SK-N-SH (cell line): ENCODE measurements at regions of chr15 and their contacts with region 1.

Region 1: DNA sequence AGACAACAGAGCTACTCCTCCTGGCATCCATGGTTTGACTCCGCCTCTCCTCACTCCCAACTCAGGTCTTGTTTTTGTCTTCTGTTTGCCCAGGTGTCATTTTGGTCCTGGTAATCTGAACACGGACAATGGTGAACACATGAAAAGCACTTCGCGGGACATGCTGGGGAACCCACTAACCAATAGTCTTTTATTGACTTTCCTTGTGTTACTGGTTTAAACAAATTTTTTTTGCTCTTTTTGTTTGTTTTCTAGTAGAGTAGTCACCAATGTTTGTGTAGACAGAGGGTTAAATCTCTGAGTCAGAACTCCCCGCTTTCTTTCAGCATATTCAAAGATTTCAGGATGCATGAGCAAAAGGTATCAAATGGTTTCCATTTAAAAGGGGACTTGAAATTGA is 38.3 kb downstream of the LARP6 start:
- DNase-seq: no peak
- H3K4me3 ChIP-seq: no peak overlapping the region
- H3K27ac ChIP-seq: no peak overlapping the region
- H3K4me1 ChIP-seq: peaks cover 0 to 4% of the 10 kb centered on the region in 2 experiments; a peak in 1 of 4 replicates
- H3K27me3 ChIP-seq: no peaks in the 10 kb centered on the region
- CTCF ChIP-seq: no peak
- EP300 ChIP-seq: no peak
- RAD21 ChIP-seq: no peak

Region 2: GRCh38 chr15:70672081-70672480 is 143.6 kb before region 1 on chr15:
- CTCF ChIA-PET with region 1: interaction called, 78 read pairs
- POLR2A ChIA-PET with region 1: no interaction called
- DNase-seq: no peak
- H3K4me3 ChIP-seq: no peak overlapping the region
- H3K27ac ChIP-seq: peak overlapping the region in 1 of 2 experiments; percentile 16; a peak in 1 of 4 replicates
- H3K4me1 ChIP-seq: peaks cover 6 to 30% of the 10 kb centered on the region in 2 experiments
- H3K27me3 ChIP-seq: no peaks in the 10 kb centered on the region
- CTCF ChIP-seq: no peak
- EP300 ChIP-seq: no peak
- RAD21 ChIP-seq: no peak

Region 3: GRCh38 chr15:70679919-70680231 is 135.8 kb before region 1 on chr15:
- CTCF ChIA-PET with region 1: interaction called, 78 read pairs
- POLR2A ChIA-PET with region 1: no interaction called
- DNase-seq: no peak
- H3K4me3 ChIP-seq: no peak overlapping the region
- H3K27ac ChIP-seq: peak overlapping the region in 1 of 2 experiments; percentile 11; a peak in 1 of 4 replicates
- H3K4me1 ChIP-seq: peaks cover 0 to 4% of the 10 kb centered on the region in 2 experiments; a peak in 1 of 4 replicates
- H3K27me3 ChIP-seq: no peaks in the 10 kb centered on the region
- CTCF ChIP-seq: no peak
- EP300 ChIP-seq: no peak
- RAD21 ChIP-seq: no peak

Region 4: GRCh38 chr15:70799667-70800450 is 15.8 kb before region 1 on chr15:
- CTCF ChIA-PET with region 1: interaction called, 23 read pairs
- POLR2A ChIA-PET with region 1: interaction called, 4 read pairs
- DNase-seq: no peak
- H3K4me3 ChIP-seq: no peak overlapping the region
- H3K27ac ChIP-seq: peak overlapping the region; percentile 70 to 90; a peak in 3 of 4 replicates
- H3K4me1 ChIP-seq: peaks cover 0 to 50% of the 10 kb centered on the region in 2 experiments; a peak in 3 of 4 replicates
- H3K27me3 ChIP-seq: no peaks in the 10 kb centered on the region
- CTCF ChIP-seq: no peak
- EP300 ChIP-seq: peak in 1 of 2 experiments; percentile 89; a peak in 1 of 4 replicates
- RAD21 ChIP-seq: no peak

Region 5: DNA sequence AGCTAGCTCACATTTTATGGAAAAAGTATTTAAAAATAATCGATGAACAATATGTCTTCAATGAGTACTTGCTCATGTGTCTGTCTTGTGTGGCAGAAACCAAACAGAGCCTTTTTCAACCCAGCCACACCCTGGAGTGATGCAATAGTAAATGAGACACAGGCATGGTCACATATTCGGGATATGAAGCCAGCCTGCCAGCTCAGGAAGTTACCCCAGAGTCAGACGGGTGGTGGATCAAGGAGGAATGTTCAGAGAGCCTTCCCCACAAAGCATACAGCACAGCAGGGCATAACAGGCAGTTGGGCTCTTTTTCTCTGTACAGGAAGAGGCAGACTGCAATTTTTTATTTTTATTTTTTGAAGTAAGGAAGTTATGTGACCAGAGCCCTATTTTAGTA is 11.0 kb after region 1 on chr15:
- CTCF ChIA-PET with region 1: interaction called, 57 read pairs
- POLR2A ChIA-PET with region 1: no interaction called
- DNase-seq: no peak
- H3K4me3 ChIP-seq: no peak overlapping the region
- H3K27ac ChIP-seq: peak overlapping the region in 1 of 2 experiments; percentile 56; a peak in 2 of 4 replicates
- H3K4me1 ChIP-seq: peaks cover 0 to 23% of the 10 kb centered on the region in 2 experiments; a peak in 2 of 4 replicates
- H3K27me3 ChIP-seq: no peaks in the 10 kb centered on the region
- CTCF ChIP-seq: no peak
- EP300 ChIP-seq: no peak
- RAD21 ChIP-seq: no peak

Region 6: DNA sequence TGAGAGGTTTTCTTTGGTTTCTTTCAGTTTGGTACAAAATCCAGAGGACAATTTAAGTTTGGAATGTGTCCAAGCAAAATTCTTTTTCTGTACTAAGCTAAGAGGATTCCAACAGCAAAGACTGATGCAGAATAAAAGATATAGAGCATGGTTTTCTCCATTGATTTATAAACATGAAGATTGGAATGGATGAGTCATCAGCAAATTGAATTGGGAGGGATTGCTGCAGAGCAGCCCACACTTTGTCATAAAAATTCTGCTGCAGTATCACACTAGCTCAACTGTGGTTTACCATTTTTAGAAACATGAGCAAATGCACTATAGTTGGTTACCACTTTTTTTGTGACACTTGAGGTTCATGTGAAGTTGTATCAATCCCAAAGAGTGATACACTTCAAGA is 54.4 kb after region 1 on chr15:
- CTCF ChIA-PET with region 1: interaction called, 28 read pairs
- POLR2A ChIA-PET with region 1: no interaction called
- DNase-seq: peak; percentile 47
- H3K4me3 ChIP-seq: peak overlapping the region in 1 of 2 experiments; percentile 26; a peak in 1 of 4 replicates
- H3K27ac ChIP-seq: peak overlapping the region; percentile 83 to 87
- H3K4me1 ChIP-seq: peaks cover 31 to 35% of the 10 kb centered on the region in 2 experiments
- H3K27me3 ChIP-seq: no peaks in the 10 kb centered on the region
- CTCF ChIP-seq: no peak
- EP300 ChIP-seq: peak; percentile 55 to 81; a peak in 3 of 4 replicates
- RAD21 ChIP-seq: no peak

Region 7: DNA sequence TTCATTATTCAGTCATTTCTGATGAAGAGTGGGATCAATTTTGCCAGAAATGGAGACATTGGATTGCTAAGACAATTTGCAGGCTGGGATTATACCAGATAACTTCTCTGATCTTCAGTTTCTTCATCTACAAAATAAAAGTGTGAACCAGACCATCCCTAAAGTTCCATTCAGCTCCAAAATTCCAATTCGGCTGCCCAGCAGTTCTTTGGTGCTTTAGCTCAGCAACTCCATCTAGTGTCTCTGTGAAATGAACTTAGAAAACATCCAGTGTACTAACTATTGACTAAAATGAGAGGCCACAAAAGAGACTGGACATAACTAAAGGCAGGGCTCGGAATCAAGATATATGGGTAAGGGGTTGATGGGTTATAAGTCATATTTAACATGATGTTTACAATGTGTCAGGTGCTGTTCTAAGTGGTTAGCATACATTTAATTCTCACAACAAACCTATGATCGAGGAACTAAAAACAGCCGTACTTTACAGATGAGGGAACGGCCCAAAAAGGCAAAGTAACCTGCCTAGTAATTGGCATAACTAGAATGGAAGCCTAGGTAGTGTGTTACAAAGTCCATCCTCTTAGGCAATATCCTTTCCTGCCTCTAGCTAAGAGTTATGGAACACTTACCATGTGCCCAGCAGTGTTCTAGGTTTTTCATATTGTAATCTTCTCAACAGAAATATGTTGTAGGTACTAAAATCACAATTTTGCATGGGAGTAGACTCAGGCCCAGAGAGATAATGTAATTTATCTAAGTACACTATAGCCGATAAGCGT is 59.5 kb after region 1 on chr15:
- CTCF ChIA-PET with region 1: interaction called, 28 read pairs
- POLR2A ChIA-PET with region 1: no interaction called
- DNase-seq: peak; percentile 45
- H3K4me3 ChIP-seq: no peak overlapping the region
- H3K27ac ChIP-seq: no peak overlapping the region
- H3K4me1 ChIP-seq: peaks cover 3 to 20% of the 10 kb centered on the region in 2 experiments
- H3K27me3 ChIP-seq: no peaks in the 10 kb centered on the region
- CTCF ChIP-seq: peak; percentile 79
- EP300 ChIP-seq: no peak
- RAD21 ChIP-seq: peak; percentile 85